Activated CD4-positive, alpha-beta T cell treated with anti-CD3 and anti-CD28 coated beads for 36 hours (primary cell): ENCODE measurements at regions of chr2 and their contacts with region 1.

Region 1: GRCh38 chr2:162073888-162074645 is at the start of gene DPP4:
- DNase-seq: peak; percentile 71
- ATAC-seq: peak; percentile 63
- H3K4me3 Mint-ChIP-seq: peak within 1 kb of the TSS; percentile 94
- H3K27ac Mint-ChIP-seq: peak within 1 kb of the TSS; percentile 91
- H3K4me1 Mint-ChIP-seq: peaks cover 43% of the 10 kb centered on the region
- H3K27me3 Mint-ChIP-seq: peaks cover 2% of the 10 kb centered on the region
- total RNA-seq, gene DPP4: 15.9 to 22.4 TPM

Region 2: DNA sequence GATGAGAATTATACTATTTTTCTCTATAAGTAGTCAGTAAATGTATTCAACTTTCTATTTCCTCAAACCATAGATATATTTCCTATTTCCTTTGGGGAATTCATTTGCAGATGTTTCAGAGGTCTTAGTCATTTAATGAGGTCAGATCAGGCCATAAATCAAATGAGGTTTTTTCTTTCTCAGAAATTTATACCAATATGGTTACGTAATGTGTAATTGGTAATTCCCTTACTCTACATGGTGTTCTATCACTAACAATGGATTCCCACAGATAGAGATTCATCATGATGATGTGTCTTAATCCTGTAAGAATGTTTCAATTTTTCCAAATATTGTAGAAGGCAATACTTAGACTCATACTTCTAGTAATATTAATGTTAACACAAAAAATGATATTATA is 108.1 kb before region 1 on chr2:
- CTCF ChIA-PET with region 1: interaction called, 3 read pairs
- POLR2A ChIA-PET with region 1: no interaction called
- intact Hi-C with region 1: loop called in 1 of 2 experiments (anchors 1 kb)
- DNase-seq: no peak
- ATAC-seq: peak; percentile 68
- H3K4me3 Mint-ChIP-seq: no peak overlapping the region
- H3K27ac Mint-ChIP-seq: no peak overlapping the region
- H3K4me1 Mint-ChIP-seq: peaks cover 26% of the 10 kb centered on the region
- H3K27me3 Mint-ChIP-seq: peaks cover 3% of the 10 kb centered on the region

Region 3: DNA sequence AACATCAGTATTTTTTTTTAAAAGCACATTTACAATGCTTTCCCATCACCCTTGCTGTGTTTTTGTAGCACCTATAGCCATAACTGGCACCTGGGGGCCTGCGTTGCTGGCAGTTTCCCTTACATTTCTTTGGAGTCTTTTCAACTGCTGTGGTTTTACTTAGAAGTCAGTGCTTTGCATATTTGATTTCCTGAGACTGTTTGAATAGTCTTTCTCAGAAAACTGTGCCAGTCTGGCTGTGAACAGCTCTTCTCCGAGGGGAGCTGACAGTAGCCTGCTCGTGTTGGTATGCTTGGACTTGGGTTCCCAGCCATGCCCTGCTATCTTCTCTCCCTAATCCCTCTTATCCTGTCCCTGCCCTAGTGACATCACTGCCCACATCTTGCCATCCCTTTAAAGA is 81.5 kb before region 1 on chr2:
- CTCF ChIA-PET with region 1: interaction called, 3 read pairs
- POLR2A ChIA-PET with region 1: no interaction called
- intact Hi-C with region 1: loop called in 1 of 2 experiments (anchors 5 kb)
- DNase-seq: peak; percentile 72
- ATAC-seq: peak; percentile 87
- H3K4me3 Mint-ChIP-seq: peak overlapping the region; percentile 69
- H3K27ac Mint-ChIP-seq: peak overlapping the region; percentile 92
- H3K4me1 Mint-ChIP-seq: peaks cover 60% of the 10 kb centered on the region
- H3K27me3 Mint-ChIP-seq: no peaks in the 10 kb centered on the region

Region 4: DNA sequence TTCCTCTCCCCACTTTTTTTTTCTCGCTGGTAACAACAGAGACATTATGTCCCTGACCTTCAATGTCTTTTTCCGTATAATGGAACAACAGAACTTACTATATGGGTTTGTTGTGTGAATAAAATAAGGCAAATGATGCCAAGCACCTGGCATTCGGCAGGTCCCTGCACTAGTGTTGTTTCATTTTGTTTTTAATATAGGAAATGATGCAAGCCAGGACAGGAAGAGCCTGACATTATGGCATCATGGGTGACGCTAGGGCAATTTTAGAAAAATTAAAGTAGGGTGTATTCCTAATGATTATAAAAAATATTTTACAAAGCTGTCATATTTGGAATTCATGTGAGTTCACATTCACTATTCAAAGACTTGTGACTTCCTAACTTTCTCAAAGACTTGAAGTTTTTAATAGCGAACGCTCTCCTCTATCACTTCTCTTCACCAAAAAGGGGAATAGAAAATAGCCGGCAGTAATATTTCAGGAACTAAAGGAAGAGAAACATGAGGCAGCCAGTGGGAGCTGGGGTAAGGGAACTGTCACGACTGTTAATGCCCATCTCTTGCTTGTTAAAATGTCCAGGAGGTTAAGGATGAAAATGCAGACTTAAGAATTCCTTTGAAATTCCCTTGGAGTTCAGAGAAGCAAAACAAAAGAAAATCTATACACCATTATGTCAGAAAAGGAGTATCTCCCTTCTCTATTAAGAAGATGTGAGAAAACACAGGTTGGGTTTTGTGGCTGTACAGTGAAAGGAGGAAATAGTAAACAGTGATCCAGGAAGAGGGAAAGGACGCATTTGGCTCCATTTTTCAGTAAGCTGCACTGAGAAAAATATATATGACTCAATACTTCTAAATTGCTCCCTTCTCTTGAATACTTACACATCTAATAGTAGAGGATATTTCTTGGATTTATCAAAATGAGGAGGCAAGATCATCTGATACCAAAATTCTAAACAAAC is 60.3 kb before region 1 on chr2:
- CTCF ChIA-PET with region 1: interaction called, 5 read pairs
- POLR2A ChIA-PET with region 1: no interaction called
- intact Hi-C with region 1: loop called (anchors 5 kb)
- DNase-seq: no peak
- ATAC-seq: peak; percentile 27
- H3K4me3 Mint-ChIP-seq: peak overlapping the region; percentile 47
- H3K27ac Mint-ChIP-seq: peak overlapping the region; percentile 95
- H3K4me1 Mint-ChIP-seq: peaks cover 56% of the 10 kb centered on the region
- H3K27me3 Mint-ChIP-seq: no peaks in the 10 kb centered on the region

Region 5: GRCh38 chr2:162058973-162059668 is 14.9 kb before region 1 on chr2:
- CTCF ChIA-PET with region 1: interaction called, 5 read pairs
- POLR2A ChIA-PET with region 1: interaction called, 6 read pairs
- intact Hi-C with region 1: loop called (anchors 1 kb)
- DNase-seq: peak; percentile 54
- ATAC-seq: peak; percentile 78
- H3K4me3 Mint-ChIP-seq: peak overlapping the region; percentile 52
- H3K27ac Mint-ChIP-seq: peak overlapping the region; percentile 85
- H3K4me1 Mint-ChIP-seq: peaks cover 86% of the 10 kb centered on the region
- H3K27me3 Mint-ChIP-seq: no peaks in the 10 kb centered on the region